ENCODE measurements at regions of chr12 and their contacts with region 1.

Region 1: DNA sequence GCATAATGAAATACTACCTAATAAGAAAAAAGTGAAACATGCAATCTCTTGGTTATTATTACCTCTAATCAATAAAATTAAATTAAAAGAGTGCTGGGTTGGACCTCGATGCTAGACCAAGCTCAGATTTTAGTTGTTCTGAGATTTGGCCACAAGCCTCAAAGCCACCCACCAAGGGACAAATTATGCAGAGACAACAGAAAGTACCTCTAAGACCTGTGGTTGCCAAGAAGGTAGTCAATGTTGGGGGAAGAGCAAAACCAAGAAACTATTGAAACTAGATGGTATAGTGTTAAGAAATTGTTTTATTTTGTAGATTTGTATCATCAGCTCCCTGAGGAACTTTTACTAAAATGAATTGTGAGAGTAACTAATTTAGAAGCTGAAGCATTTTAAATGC is 43.8 kb upstream of the ARID2 start:
- DNase-seq: no peak
- H3K4me3 Mint-ChIP-seq: no peak overlapping the region
- H3K27ac Mint-ChIP-seq: no peak overlapping the region
- H3K4me1 Mint-ChIP-seq: peaks cover 13% of the 10 kb centered on the region
- H3K27me3 Mint-ChIP-seq: peaks cover 2% of the 10 kb centered on the region

Region 2: DNA sequence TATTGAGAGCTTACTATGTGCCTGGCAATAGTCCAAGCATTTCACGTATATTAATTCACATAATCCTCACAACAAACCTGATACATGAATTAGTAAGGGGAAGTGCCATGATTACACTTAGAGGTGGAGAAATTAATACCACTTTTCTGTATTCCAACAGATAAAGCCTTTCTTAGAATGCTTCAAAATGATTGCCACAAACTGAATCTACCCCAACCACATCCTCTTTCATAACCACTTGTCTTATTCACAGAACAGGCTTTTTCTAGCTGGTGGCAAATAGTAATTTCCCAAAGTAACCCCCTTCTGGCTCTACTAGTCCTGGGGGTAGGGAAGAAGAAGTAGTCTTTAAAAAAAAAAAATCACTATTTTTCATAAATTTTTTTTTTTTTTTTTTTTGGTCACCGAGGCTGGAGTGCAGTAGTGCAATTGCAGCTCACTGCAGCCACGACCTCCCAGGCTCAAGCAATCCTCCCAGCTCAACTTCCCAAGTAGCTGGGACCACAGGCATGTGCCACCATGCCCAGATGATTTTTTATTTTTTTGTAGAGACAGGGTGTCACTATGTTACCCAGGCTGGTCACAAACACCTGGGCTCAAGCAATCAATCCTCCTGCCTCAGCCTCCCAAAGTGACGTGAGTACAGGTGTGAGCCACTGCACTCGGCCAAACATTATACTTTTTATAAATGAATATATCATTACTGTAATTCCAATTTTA is 15.2 kb before region 1 on chr12:
- CTCF ChIA-PET with region 1: no interaction called
- intact Hi-C with region 1: loop called (anchors 1 kb)
- DNase-seq: no peak
- H3K4me3 Mint-ChIP-seq: no peak overlapping the region
- H3K27ac Mint-ChIP-seq: no peak overlapping the region
- H3K4me1 Mint-ChIP-seq: peaks cover 30% of the 10 kb centered on the region
- H3K27me3 Mint-ChIP-seq: peaks cover 7% of the 10 kb centered on the region

Region 3: GRCh38 chr12:45713078-45713477 is 27.4 kb after region 1 on chr12:
- CTCF ChIA-PET with region 1: no interaction called
- intact Hi-C with region 1: loop called (anchors 2 kb)
- DNase-seq: no peak
- H3K4me3 Mint-ChIP-seq: no peak overlapping the region
- H3K27ac Mint-ChIP-seq: no peak overlapping the region
- H3K4me1 Mint-ChIP-seq: peaks cover 16% of the 10 kb centered on the region
- H3K27me3 Mint-ChIP-seq: no peaks in the 10 kb centered on the region